CD8-positive, alpha-beta T cell (primary cell): ENCODE measurements at regions of chr18 and their contacts with region 1.

Region 1: GRCh38 chr18:42114310-42114943 is 159.4 kb downstream of the PIK3C3 start:
- DNase-seq: peak; percentile 12 to 70 (median 46)
- ATAC-seq: peak; percentile 51
- H3K4me3 ChIP-seq: no peak overlapping the region
- H3K4me3 Mint-ChIP-seq: peak overlapping the region; percentile 26
- H3K27ac ChIP-seq: no peak overlapping the region
- H3K27ac Mint-ChIP-seq: no peak overlapping the region
- H3K4me1 ChIP-seq: no peaks in the 10 kb centered on the region
- H3K4me1 Mint-ChIP-seq: peaks cover 9% of the 10 kb centered on the region
- H3K27me3 ChIP-seq: no peaks in the 10 kb centered on the region
- H3K27me3 Mint-ChIP-seq: peaks cover 5% of the 10 kb centered on the region
- CTCF ChIP-seq: peak; percentile 94

Region 2: DNA sequence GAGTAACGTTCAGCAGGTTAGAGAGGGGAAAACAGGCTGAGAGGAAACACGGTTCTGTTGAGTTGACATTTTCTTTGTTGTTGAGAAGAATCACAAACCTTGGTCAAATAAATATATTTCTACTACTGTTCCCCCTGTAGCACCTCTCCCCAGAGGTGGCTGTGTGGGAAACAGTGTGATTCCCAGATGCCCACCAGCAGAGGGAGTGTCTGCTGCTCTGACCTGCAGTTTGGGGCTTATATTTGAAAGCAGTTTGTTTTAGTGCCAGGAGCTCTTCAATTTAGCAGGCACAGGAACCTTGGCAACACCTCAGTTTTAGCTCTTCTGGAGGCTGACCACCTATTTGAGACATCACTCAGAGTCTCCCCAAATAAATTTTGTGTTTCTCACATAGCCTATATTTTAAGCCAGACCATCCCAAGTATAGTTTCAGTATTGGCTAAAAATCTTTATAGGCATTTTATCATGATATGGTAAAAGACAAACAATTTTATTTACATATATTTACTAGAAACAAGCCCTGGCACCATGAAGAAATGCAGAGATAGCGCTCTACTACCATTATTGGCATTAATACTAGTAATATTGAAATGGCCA is 83.7 kb before region 1 on chr18:
- CTCF ChIA-PET with region 1: no interaction called
- POLR2A ChIA-PET with region 1: no interaction called
- intact Hi-C with region 1: no loop called
- DNase-seq: peak in 1 of 9 experiments; percentile 7
- ATAC-seq: no peak
- H3K4me3 ChIP-seq: no peak overlapping the region
- H3K4me3 Mint-ChIP-seq: no peak overlapping the region
- H3K27ac ChIP-seq: no peak overlapping the region
- H3K27ac Mint-ChIP-seq: no peak overlapping the region
- H3K4me1 ChIP-seq: no peaks in the 10 kb centered on the region
- H3K4me1 Mint-ChIP-seq: peaks cover 10% of the 10 kb centered on the region
- H3K27me3 ChIP-seq: no peaks in the 10 kb centered on the region
- H3K27me3 Mint-ChIP-seq: no peaks in the 10 kb centered on the region
- CTCF ChIP-seq: no peak

Region 3: DNA sequence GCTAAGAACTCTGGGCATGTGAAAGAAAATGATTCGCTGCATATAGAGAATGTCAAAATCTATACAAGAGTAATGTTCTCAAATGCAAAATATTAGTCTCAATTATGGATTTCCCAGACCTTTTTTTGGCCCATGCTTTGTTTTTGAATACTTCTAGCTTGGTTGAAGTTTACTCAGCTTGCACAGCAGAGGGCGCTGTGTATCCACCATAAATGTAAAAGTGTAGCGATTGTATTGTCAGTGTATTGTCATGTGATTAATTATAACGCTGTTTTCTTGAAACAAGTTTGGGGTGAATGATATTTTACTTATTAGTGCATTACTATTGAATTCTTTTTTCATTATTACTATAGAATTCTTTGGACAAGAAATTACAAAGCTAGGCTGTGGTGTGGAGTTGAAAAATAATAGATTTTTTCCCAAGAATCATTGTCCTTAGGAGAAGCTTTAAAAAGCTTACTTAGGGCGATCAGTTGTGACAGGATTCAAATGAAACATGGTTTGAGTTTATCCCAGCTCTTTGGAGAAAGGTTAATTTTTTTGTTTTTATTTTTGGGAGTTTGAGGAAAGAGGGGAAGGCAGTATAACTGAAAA is 61.1 kb before region 1 on chr18:
- CTCF ChIA-PET with region 1: interaction called, 10 read pairs
- POLR2A ChIA-PET with region 1: no interaction called
- intact Hi-C with region 1: no loop called
- DNase-seq: peak; percentile 21 to 73 (median 55)
- ATAC-seq: peak; percentile 69
- H3K4me3 ChIP-seq: no peak overlapping the region
- H3K4me3 Mint-ChIP-seq: no peak overlapping the region
- H3K27ac ChIP-seq: no peak overlapping the region
- H3K27ac Mint-ChIP-seq: peak overlapping the region; percentile 28
- H3K4me1 ChIP-seq: peaks cover 3% of the 10 kb centered on the region
- H3K4me1 Mint-ChIP-seq: peaks cover 9% of the 10 kb centered on the region
- H3K27me3 ChIP-seq: no peaks in the 10 kb centered on the region
- H3K27me3 Mint-ChIP-seq: no peaks in the 10 kb centered on the region
- CTCF ChIP-seq: peak; percentile 100

Region 4: GRCh38 chr18:42100911-42101310 is 13.5 kb before region 1 on chr18:
- CTCF ChIA-PET with region 1: interaction called, 44 read pairs
- POLR2A ChIA-PET with region 1: no interaction called
- intact Hi-C with region 1: no loop called
- DNase-seq: no peak
- ATAC-seq: no peak
- H3K4me3 ChIP-seq: no peak overlapping the region
- H3K4me3 Mint-ChIP-seq: no peak overlapping the region
- H3K27ac ChIP-seq: no peak overlapping the region
- H3K27ac Mint-ChIP-seq: no peak overlapping the region
- H3K4me1 ChIP-seq: no peaks in the 10 kb centered on the region
- H3K4me1 Mint-ChIP-seq: no peaks in the 10 kb centered on the region
- H3K27me3 ChIP-seq: no peaks in the 10 kb centered on the region
- H3K27me3 Mint-ChIP-seq: no peaks in the 10 kb centered on the region
- CTCF ChIP-seq: no peak

Region 5: GRCh38 chr18:42126586-42126985 is 12.2 kb after region 1 on chr18:
- CTCF ChIA-PET with region 1: interaction called, 25 read pairs
- POLR2A ChIA-PET with region 1: no interaction called
- intact Hi-C with region 1: no loop called
- DNase-seq: no peak
- ATAC-seq: no peak
- H3K4me3 ChIP-seq: no peak overlapping the region
- H3K4me3 Mint-ChIP-seq: no peak overlapping the region
- H3K27ac ChIP-seq: no peak overlapping the region
- H3K27ac Mint-ChIP-seq: no peak overlapping the region
- H3K4me1 ChIP-seq: no peaks in the 10 kb centered on the region
- H3K4me1 Mint-ChIP-seq: no peaks in the 10 kb centered on the region
- H3K27me3 ChIP-seq: no peaks in the 10 kb centered on the region
- H3K27me3 Mint-ChIP-seq: peaks cover 6% of the 10 kb centered on the region
- CTCF ChIP-seq: no peak

Region 6: DNA sequence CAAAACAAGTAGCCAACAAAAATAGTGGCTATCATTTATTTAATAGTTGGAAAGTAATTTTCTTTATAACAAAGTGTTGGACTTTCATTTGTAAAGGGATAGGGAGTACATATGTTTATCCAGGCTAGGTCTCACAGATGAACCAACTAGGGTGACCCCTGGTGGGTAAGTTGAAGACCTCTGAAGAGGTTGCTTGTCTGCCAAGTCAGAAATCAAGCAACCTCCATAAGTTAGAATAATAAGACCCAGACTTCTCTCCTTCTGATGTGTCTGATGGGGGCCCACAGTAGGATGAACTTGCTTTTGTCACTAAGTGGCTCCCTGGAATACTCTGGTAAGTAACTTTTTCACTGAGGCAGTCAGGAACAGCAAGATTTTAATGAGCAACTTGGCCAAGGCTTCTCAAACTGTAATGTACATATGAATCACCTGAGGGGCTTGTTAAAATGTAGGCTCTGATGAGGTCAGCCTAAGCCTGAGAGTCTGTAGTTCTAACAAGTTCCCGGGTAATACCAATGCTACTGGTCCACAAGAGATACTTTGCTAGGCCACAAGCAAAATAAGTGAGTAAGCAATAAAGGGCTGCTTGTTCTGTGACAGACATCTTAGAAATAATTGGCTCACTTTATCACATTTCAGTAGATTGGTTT is 160.2 kb after region 1 on chr18:
- CTCF ChIA-PET with region 1: interaction called, 3 read pairs
- POLR2A ChIA-PET with region 1: no interaction called
- intact Hi-C with region 1: loop called (anchors 1 to 5 kb)
- DNase-seq: peak in 2 of 9 experiments; percentile 2 to 3
- ATAC-seq: no peak
- H3K4me3 ChIP-seq: no peak overlapping the region
- H3K4me3 Mint-ChIP-seq: no peak overlapping the region
- H3K27ac ChIP-seq: no peak overlapping the region
- H3K27ac Mint-ChIP-seq: no peak overlapping the region
- H3K4me1 ChIP-seq: no peaks in the 10 kb centered on the region
- H3K4me1 Mint-ChIP-seq: no peaks in the 10 kb centered on the region
- H3K27me3 ChIP-seq: no peaks in the 10 kb centered on the region
- H3K27me3 Mint-ChIP-seq: no peaks in the 10 kb centered on the region
- CTCF ChIP-seq: no peak

Region 7: DNA sequence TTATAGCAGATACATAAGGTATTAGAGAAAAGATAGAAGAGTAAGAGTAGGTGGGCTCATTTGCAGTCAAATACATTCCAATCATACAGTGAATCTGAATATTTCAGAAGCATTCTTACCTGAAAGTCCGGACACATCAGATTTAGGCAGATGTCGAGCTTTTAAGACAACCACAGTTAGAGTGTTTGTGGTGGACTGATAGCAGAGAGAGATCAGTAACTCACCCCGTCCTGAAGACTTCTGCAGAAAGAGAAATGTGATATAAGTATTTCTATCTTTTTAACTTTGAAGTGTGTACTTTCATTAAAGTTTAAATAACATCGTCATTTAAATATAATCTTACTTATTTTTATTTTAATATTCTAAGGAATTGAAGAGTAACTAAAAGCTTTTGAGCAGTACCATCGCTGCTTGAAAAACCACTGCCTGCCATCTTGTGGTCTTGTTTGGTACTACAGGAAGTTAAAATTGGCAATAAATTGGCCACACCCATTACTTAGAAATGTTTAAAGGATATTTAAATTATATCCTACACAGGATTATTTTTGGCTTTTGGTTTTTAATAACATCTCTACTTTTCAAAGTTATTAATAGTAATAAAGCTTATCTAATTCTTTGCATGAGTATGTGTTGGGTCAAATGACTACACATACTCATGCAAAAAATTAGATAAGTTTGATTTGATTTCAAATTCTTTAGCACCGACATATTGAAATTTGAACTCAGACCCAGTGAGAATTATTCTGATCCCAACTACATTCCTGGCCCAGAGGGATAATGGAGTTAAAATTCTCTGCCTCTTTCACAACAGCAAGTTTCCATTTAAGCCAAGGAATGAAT is 1157.4 kb after region 1 on chr18:
- CTCF ChIA-PET with region 1: interaction called, 18 read pairs
- POLR2A ChIA-PET with region 1: no interaction called
- intact Hi-C with region 1: loop called in 1 of 2 experiments (anchors 1 kb)
- DNase-seq: peak in 2 of 9 experiments; percentile 29 to 30
- ATAC-seq: no peak
- H3K4me3 ChIP-seq: no peak overlapping the region
- H3K4me3 Mint-ChIP-seq: no peak overlapping the region
- H3K27ac ChIP-seq: no peak overlapping the region
- H3K27ac Mint-ChIP-seq: no peak overlapping the region
- H3K4me1 ChIP-seq: no peaks in the 10 kb centered on the region
- H3K4me1 Mint-ChIP-seq: no peaks in the 10 kb centered on the region
- H3K27me3 ChIP-seq: no peaks in the 10 kb centered on the region
- H3K27me3 Mint-ChIP-seq: no peaks in the 10 kb centered on the region
- CTCF ChIP-seq: peak; percentile 73

Region 8: GRCh38 chr18:43587538-43588153 is 1473.2 kb after region 1 on chr18:
- CTCF ChIA-PET with region 1: interaction called, 11 read pairs
- POLR2A ChIA-PET with region 1: no interaction called
- intact Hi-C with region 1: loop called in 1 of 2 experiments (anchors 1 kb)
- DNase-seq: peak in 2 of 9 experiments; percentile 11 to 29
- ATAC-seq: peak; percentile 23
- H3K4me3 ChIP-seq: no peak overlapping the region
- H3K4me3 Mint-ChIP-seq: no peak overlapping the region
- H3K27ac ChIP-seq: no peak overlapping the region
- H3K27ac Mint-ChIP-seq: no peak overlapping the region
- H3K4me1 ChIP-seq: no peaks in the 10 kb centered on the region
- H3K4me1 Mint-ChIP-seq: no peaks in the 10 kb centered on the region
- H3K27me3 ChIP-seq: no peaks in the 10 kb centered on the region
- H3K27me3 Mint-ChIP-seq: no peaks in the 10 kb centered on the region
- CTCF ChIP-seq: peak; percentile 53